ENCODE measurements at regions of chr9 and their contacts with region 1.

Region 1: GRCh38 chr9:136885950-136886578 is at the start of gene TRAF2:
- DNase-seq: peak; percentile 97 to 98
- ATAC-seq: peak; percentile 97 to 98
- H3K4me3 ChIP-seq: peak within 1 kb of the TSS; percentile 75 to 91 (median 82)
- H3K27ac ChIP-seq: peak within 1 kb of the TSS; percentile 84 to 92 (median 90)
- H3K4me1 ChIP-seq: peaks cover 13 to 14% of the 10 kb centered on the region in 2 donors
- H3K27me3 ChIP-seq: no peaks in the 10 kb centered on the region
- CTCF ChIP-seq: no peak
- POLR2A ChIP-seq: peak; percentile 58 to 81
- total RNA-seq, gene TRAF2: 3.5 to 6.6 (median 4.8) TPM

Region 2: GRCh38 chr9:135743546-135744332 is 1142.3 kb before region 1 on chr9:
- in situ Hi-C with region 1: no loop called
- intact Hi-C with region 1: no loop called
- DNase-seq: peak; percentile 36 to 85
- ATAC-seq: peak; percentile 65 to 79
- H3K4me3 ChIP-seq: peak overlapping the region; percentile 32 to 41 (median 36)
- H3K27ac ChIP-seq: peak overlapping the region; percentile 74 to 92 (median 86)
- H3K4me1 ChIP-seq: peaks cover 22 to 35% of the 10 kb centered on the region in 2 donors
- H3K27me3 ChIP-seq: no peaks in the 10 kb centered on the region
- CTCF ChIP-seq: no peak
- POLR2A ChIP-seq: peak; percentile 32 to 38

Region 3: GRCh38 chr9:136631038-136632000 is 254.7 kb before region 1 on chr9:
- in situ Hi-C with region 1: no loop called
- intact Hi-C with region 1: no loop called
- DNase-seq: peak; percentile 44 to 64
- ATAC-seq: peak; percentile 75 to 86
- H3K4me3 ChIP-seq: no peak overlapping the region
- H3K27ac ChIP-seq: no peak overlapping the region
- H3K4me1 ChIP-seq: no peaks in the 10 kb centered on the region
- H3K27me3 ChIP-seq: no peaks in the 10 kb centered on the region
- CTCF ChIP-seq: peak; percentile 69 to 85 (median 83)
- POLR2A ChIP-seq: no peak

Region 4: GRCh38 chr9:136865735-136866103 is 20.3 kb before region 1 on chr9:
- in situ Hi-C with region 1: no loop called
- intact Hi-C with region 1: loop called (anchors 1 kb)
- DNase-seq: no peak
- ATAC-seq: peak; percentile 4 to 31
- H3K4me3 ChIP-seq: peak overlapping the region; percentile 87 to 100 (median 94)
- H3K27ac ChIP-seq: peak overlapping the region; percentile 88 to 100 (median 97)
- H3K4me1 ChIP-seq: peaks cover 21 to 27% of the 10 kb centered on the region in 2 donors
- H3K27me3 ChIP-seq: no peaks in the 10 kb centered on the region
- CTCF ChIP-seq: no peak
- POLR2A ChIP-seq: no peak

Region 5: GRCh38 chr9:136902259-136902821 is 16.3 kb after region 1 on chr9:
- in situ Hi-C with region 1: no loop called
- intact Hi-C with region 1: no loop called
- DNase-seq: peak; percentile 72 to 81
- ATAC-seq: peak; percentile 84 to 90
- H3K4me3 ChIP-seq: no peak overlapping the region
- H3K27ac ChIP-seq: peak overlapping the region; percentile 76 to 82 (median 80)
- H3K4me1 ChIP-seq: peaks cover 24 to 32% of the 10 kb centered on the region in 2 donors
- H3K27me3 ChIP-seq: no peaks in the 10 kb centered on the region
- CTCF ChIP-seq: no peak
- POLR2A ChIP-seq: peak in 1 of 2 donors; percentile 45

Region 6: DNA sequence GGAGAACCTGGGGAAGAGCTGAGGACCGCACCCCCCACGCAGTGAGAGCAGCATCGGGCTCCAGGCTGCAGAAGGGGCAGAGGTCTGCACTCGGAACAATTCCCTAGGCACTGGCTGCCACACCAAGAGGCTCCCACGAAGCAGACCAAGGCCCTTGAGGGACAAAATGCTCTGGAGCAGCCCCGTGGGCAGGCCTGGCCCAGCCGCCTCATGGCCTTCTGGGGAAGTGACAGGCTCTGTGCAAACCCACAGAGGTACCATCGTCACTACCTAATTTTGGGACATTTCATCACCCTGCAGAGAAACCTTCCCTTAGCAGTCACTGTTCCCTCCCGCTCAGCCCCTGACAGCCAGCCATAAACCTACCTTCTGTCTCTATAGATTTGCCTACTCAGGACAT is 42.5 kb after region 1 on chr9:
- in situ Hi-C with region 1: no loop called
- intact Hi-C with region 1: loop called (anchors 5 kb)
- DNase-seq: peak; percentile 75 to 89
- ATAC-seq: peak; percentile 82 to 95
- H3K4me3 ChIP-seq: peak overlapping the region in 3 of 4 donors; percentile 14 to 43 (median 36)
- H3K27ac ChIP-seq: peak overlapping the region; percentile 91 to 96 (median 96)
- H3K4me1 ChIP-seq: peaks cover 37 to 64% of the 10 kb centered on the region in 2 donors
- H3K27me3 ChIP-seq: no peaks in the 10 kb centered on the region
- CTCF ChIP-seq: peak; percentile 32 to 67 (median 50)
- POLR2A ChIP-seq: peak; percentile 86 to 88

Region 7: GRCh38 chr9:136949817-136950655 is 64.0 kb after region 1 on chr9:
- in situ Hi-C with region 1: no loop called
- intact Hi-C with region 1: loop called (anchors 2 kb)
- DNase-seq: peak; percentile 92 to 96
- ATAC-seq: peak; percentile 89 to 91
- H3K4me3 ChIP-seq: peak overlapping the region; percentile 67 to 82 (median 79)
- H3K27ac ChIP-seq: peak overlapping the region; percentile 85 to 91 (median 87)
- H3K4me1 ChIP-seq: peaks cover 6 to 26% of the 10 kb centered on the region in 2 donors
- H3K27me3 ChIP-seq: no peaks in the 10 kb centered on the region
- CTCF ChIP-seq: peak in 3 of 5 experiments; percentile 37 to 51 (median 37)
- POLR2A ChIP-seq: peak; percentile 84 to 85

Region 8: DNA sequence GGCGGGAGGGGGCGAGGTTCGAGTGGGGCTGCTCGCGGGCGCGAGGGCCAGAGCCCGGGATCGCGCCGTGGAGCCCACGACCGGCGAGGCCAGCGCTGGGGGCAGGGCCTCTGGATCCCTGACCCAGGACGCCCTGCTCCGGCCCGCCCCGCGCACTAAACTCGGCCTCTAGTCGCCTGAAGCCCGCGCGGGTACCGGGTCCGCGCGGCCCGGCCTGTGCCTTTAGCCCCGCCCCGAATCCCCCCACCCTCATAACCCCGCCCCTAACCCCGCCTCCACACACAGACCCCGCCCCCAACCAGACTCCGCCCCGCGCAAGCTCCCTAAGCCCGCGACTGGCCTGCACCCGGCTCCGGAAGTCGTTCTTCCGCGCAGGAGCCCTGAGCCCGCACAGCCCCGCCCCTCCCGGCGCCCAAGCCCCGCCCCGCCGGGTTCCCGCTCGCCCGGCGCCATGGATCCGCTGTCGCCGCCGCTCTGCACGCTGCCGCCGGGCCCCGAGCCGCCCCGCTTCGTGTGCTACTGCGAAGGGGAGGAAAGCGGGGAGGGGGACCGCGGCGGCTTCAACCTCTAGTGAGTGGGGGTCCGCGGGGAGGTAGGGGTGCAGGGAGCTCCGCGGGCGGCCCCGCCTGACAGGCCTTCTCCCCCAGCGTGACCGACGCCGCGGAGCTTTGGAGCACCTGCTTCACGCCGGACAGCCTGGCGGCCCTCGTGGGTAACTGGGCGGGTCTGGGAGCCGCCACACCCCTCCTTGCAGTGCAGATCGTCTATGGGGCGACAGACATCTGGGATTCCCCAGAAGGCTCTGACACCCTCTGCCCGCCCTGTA is 106.1 kb after region 1 on chr9 and contains the start of gene PAXX:
- in situ Hi-C with region 1: no loop called
- intact Hi-C with region 1: loop called (anchors 1 kb)
- DNase-seq: peak; percentile 85 to 88
- ATAC-seq: peak; percentile 90 to 94
- H3K4me3 ChIP-seq: peak within 1 kb of the TSS; percentile 65 to 95 (median 82)
- H3K27ac ChIP-seq: peak within 1 kb of the TSS; percentile 58 to 86 (median 80)
- H3K4me1 ChIP-seq: peaks cover 6 to 12% of the 10 kb centered on the region in 2 donors
- H3K27me3 ChIP-seq: peaks cover 14 to 19% (median 18%) of the 10 kb centered on the region in 3 donors
- CTCF ChIP-seq: no peak
- POLR2A ChIP-seq: peak in 1 of 2 donors; percentile 40
- total RNA-seq, gene PAXX: 10.8 to 15.6 (median 14.6) TPM

Region 9: GRCh38 chr9:137086531-137087408 is 200.7 kb after region 1 on chr9 and contains the start of gene MAN1B1:
- in situ Hi-C with region 1: no loop called
- intact Hi-C with region 1: loop called (anchors 5 kb)
- DNase-seq: peak; percentile 99
- ATAC-seq: peak; percentile 93 to 94
- H3K4me3 ChIP-seq: peak within 1 kb of the TSS; percentile 67 to 92 (median 78)
- H3K27ac ChIP-seq: peak within 1 kb of the TSS; percentile 91 to 96 (median 92)
- H3K4me1 ChIP-seq: peaks cover 18 to 21% of the 10 kb centered on the region in 2 donors
- H3K27me3 ChIP-seq: no peaks in the 10 kb centered on the region
- CTCF ChIP-seq: peak in 1 of 5 experiments; percentile 23
- POLR2A ChIP-seq: peak; percentile 82 to 83
- total RNA-seq, gene MAN1B1: 15.9 to 31.9 (median 21.1) TPM

Measured in gastrocnemius medialis (tissue), 4 donors.